HepG2 (cell line): ENCODE measurements at regions of chr12 and their contacts with region 1.

Region 1: GRCh38 chr12:15752785-15753184 is 36.4 kb downstream of the EPS8 start:
- DNase-seq: no peak
- ATAC-seq: no peak
- H3K4me3 ChIP-seq: no peak overlapping the region
- H3K27ac ChIP-seq: no peak overlapping the region
- H3K4me1 ChIP-seq: 0 out of 2 replicates have a peak, but pooled peaks cover under 1% of the 10 kb centered on the region
- H3K27me3 ChIP-seq: no peaks in the 10 kb centered on the region
- CTCF ChIP-seq: no peak
- EP300 ChIP-seq: no peak
- POLR2A ChIP-seq: no peak
- RAD21 ChIP-seq: no peak

Region 2: GRCh38 chr12:15763328-15763727 is 10.5 kb after region 1 on chr12:
- CTCF ChIA-PET with region 1: no interaction called
- POLR2A ChIA-PET with region 1: no interaction called
- in situ Hi-C with region 1: no loop called
- intact Hi-C with region 1: loop called (anchors 1 kb)
- DNase-seq: no peak
- ATAC-seq: no peak
- H3K4me3 ChIP-seq: no peak overlapping the region
- H3K27ac ChIP-seq: no peak overlapping the region
- H3K4me1 ChIP-seq: 0 out of 2 replicates have a peak, but pooled peaks cover 4% of the 10 kb centered on the region
- H3K27me3 ChIP-seq: no peaks in the 10 kb centered on the region
- CTCF ChIP-seq: no peak
- EP300 ChIP-seq: no peak
- POLR2A ChIP-seq: no peak
- RAD21 ChIP-seq: no peak